Activated CD4-positive, alpha-beta T cell treated with anti-CD3 and anti-CD28 coated beads, Interleukin-2, amount 10 ng/mL, durations not matched to agents 24 days and 14 days (primary cell): ENCODE measurements at regions of chr6 and their contacts with region 1.

Region 1: GRCh38 chr6:116010790-116011401 is 49.8 kb downstream of the FRK start:
- DNase-seq: peak; percentile 82
- H3K4me3 Mint-ChIP-seq: no peak overlapping the region
- H3K27ac Mint-ChIP-seq: no peak overlapping the region
- H3K4me1 Mint-ChIP-seq: no peaks in the 10 kb centered on the region
- H3K27me3 Mint-ChIP-seq: peaks cover 28% of the 10 kb centered on the region

Region 2: GRCh38 chr6:116100419-116101301 is 89.8 kb after region 1 on chr6 and contains the start of gene NT5DC1:
- intact Hi-C with region 1: loop called (anchors 1 kb)
- DNase-seq: peak; percentile 96
- H3K4me3 Mint-ChIP-seq: peak within 1 kb of the TSS; percentile 95
- H3K27ac Mint-ChIP-seq: peak within 1 kb of the TSS; percentile 92
- H3K4me1 Mint-ChIP-seq: peaks cover 38% of the 10 kb centered on the region
- H3K27me3 Mint-ChIP-seq: no peaks in the 10 kb centered on the region
- total RNA-seq, gene NT5DC1: 38.1 and 38.9 TPM in 2 replicates